Activated T-helper 1 cell treated with anti-CD3 and anti-CD28 coated beads, Interleukin-12 subunit alpha, Interleukin-12 subunit beta, Interleukin-2, Interleukin-4 antibody, amounts not matched to agents 30 ng/mL and 10 ng/mL and 1 ng/mL, durations not matched to agents 14 hours and 24 hours and 36 hours (primary cell): ENCODE measurements at regions of chr7 and their contacts with region 1.

Region 1: DNA sequence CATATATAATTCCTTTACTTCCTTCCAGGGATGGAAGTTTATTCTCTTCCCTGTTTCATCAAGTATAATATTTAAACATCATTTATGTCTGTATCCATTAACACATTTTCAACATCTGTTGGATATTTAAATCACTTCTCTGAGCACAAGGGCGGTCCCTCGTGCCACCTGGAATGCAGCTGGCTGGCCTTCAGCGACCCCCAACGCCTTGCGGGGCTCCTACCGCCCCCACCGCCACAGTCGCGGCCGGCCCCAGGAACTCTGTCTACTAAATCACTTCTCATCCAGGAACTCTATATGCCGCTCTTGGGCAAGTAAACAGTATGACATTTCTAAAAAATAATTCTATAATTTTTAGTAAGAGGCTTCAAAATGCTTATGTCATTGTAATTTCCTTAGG is 221.1 kb upstream of the PTN start:
- DNase-seq: no peak
- H3K4me3 Mint-ChIP-seq: no peak overlapping the region
- H3K27ac Mint-ChIP-seq: no peak overlapping the region
- H3K4me1 Mint-ChIP-seq: no peaks in the 10 kb centered on the region
- H3K27me3 Mint-ChIP-seq: peaks cover 4% of the 10 kb centered on the region

Region 2: DNA sequence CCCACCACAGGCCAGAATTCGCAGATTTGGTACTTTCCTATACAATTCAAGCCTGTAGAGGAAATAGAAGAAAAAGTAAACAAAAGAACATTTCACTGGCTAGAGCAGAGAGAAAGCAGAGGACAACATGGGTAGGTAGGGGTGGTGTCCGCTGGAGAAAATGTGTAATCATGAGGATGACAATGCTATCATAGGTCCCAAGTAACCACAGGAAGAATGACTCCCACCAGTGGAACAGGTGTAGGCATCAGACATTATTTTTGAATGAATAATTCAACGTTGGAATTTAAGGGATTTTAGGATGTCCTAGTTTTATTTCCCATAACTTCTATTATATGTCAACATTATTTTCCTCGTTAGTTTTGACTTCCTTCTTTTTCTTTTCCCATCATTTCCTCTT is 33.2 kb after region 1 on chr7:
- intact Hi-C with region 1: loop called (anchors 2 kb)
- DNase-seq: no peak
- H3K4me3 Mint-ChIP-seq: no peak overlapping the region
- H3K27ac Mint-ChIP-seq: no peak overlapping the region
- H3K4me1 Mint-ChIP-seq: no peaks in the 10 kb centered on the region
- H3K27me3 Mint-ChIP-seq: peaks cover 7% of the 10 kb centered on the region